Ovary (tissue), 10 donors: ENCODE measurements at regions of chr5 and their contacts with region 1.

Region 1: GRCh38 chr5:170267431-170268152 is 30.0 kb downstream of the LCP2 start:
- DNase-seq: peak; percentile 71 to 85 (median 77)
- H3K4me3 ChIP-seq: no peak overlapping the region
- H3K27ac ChIP-seq: no peak overlapping the region
- H3K4me1 ChIP-seq: peaks cover 13% of the 10 kb centered on the region
- H3K27me3 ChIP-seq: no peaks in the 10 kb centered on the region
- CTCF ChIP-seq: peak in 2 of 3 donors; percentile 71 to 74
- EP300 ChIP-seq: no peak
- POLR2A ChIP-seq: no peak

Region 2: DNA sequence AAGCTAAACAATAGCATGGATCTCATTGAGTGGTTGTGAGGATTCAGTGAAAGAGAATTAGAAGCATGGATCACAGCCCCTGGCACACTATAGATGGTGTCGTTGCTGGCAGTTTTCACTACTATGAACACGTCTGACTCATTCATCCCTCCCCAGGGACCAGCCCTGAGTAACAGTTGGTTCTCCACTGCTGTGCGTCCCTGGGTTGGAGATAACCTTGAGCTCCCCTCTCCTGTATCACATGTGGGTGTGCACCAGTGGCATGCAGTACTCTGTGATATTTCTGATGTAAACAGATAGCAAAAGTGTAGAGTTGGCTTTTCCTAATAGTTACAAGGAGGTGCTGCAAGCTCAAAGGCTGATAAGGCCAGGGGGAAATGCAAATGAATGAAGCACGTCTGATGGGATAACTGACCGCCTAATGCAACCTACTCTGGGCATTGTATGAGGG is 38.8 kb after region 1 on chr5:
- intact Hi-C with region 1: loop called in 1 of 4 experiments (anchors 5 kb)
- DNase-seq: peak; percentile 58 to 87 (median 80)
- H3K4me3 ChIP-seq: no peak overlapping the region
- H3K27ac ChIP-seq: peak overlapping the region; percentile 45 to 54
- H3K4me1 ChIP-seq: peaks cover 32% of the 10 kb centered on the region
- H3K27me3 ChIP-seq: no peaks in the 10 kb centered on the region
- CTCF ChIP-seq: no peak
- EP300 ChIP-seq: no peak
- POLR2A ChIP-seq: no peak

Region 3: GRCh38 chr5:170333161-170333910 is 65.7 kb after region 1 on chr5:
- intact Hi-C with region 1: loop called in 1 of 4 experiments (anchors 5 kb)
- DNase-seq: no peak
- H3K4me3 ChIP-seq: no peak overlapping the region
- H3K27ac ChIP-seq: no peak overlapping the region
- H3K4me1 ChIP-seq: peaks cover 8% of the 10 kb centered on the region
- H3K27me3 ChIP-seq: no peaks in the 10 kb centered on the region
- CTCF ChIP-seq: no peak
- EP300 ChIP-seq: no peak
- POLR2A ChIP-seq: no peak

Region 4: DNA sequence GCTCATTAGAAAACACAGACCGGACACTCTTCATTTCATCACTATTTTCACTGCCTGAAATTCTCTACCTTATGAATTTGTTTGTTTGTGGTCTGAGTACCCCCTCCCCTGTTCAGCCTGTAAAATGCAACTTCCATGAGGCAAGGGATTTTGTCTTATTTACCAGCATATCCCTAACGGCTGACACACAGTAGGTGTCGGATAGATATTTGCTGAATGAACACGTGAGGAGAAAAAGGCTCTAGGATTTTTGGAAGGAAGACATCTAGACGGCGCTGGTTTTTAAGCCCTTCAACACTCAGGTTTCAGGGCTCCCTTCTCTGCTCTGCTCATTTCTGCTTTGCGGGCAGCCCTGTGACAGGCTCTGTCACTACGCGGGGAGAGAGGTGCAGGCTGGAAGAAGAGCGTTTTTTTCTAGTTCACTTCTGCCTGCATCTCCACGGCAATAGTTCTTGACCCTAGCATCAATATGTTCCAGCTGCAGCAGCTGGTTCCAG is 80.6 kb after region 1 on chr5:
- intact Hi-C with region 1: loop called in 1 of 4 experiments (anchors 5 kb)
- DNase-seq: no peak
- H3K4me3 ChIP-seq: no peak overlapping the region
- H3K27ac ChIP-seq: no peak overlapping the region
- H3K4me1 ChIP-seq: peaks cover 4% of the 10 kb centered on the region
- H3K27me3 ChIP-seq: no peaks in the 10 kb centered on the region
- CTCF ChIP-seq: peak in 2 of 3 donors; percentile 51 to 62
- EP300 ChIP-seq: no peak
- POLR2A ChIP-seq: no peak

Region 5: DNA sequence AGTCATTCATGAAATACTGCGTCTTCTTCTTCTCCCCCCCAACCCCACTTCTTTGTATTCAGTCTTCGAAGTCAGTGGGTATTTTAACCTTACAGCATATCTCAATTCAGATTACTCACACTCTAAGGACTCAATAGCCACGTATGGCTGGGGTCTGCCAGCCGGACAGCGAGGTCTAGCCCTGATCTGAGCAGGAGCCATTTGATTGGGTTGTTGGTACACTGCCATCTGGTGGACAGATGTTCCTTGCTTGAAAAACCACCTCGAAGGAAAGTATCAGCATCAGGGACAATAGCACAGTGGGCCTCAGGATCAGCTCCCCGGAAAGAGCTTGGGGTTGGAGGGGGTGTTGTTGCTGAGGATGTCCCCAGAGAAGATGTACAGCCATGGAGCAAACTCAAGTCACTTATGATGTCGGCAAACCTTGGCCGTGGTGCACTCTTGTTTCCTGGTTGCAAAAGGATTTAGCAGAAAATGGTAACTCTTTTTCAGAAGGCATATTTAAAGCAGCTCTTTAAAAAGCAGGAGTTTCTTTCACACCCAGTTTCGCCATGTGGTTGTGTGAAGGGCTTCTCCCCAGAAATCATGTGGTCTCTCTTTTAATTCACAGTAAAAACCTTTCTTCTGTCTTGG is 153.3 kb after region 1 on chr5:
- intact Hi-C with region 1: loop called in 1 of 4 experiments (anchors 5 kb)
- DNase-seq: peak; percentile 40 to 63 (median 51)
- H3K4me3 ChIP-seq: no peak overlapping the region
- H3K27ac ChIP-seq: no peak overlapping the region
- H3K4me1 ChIP-seq: no peaks in the 10 kb centered on the region
- H3K27me3 ChIP-seq: no peaks in the 10 kb centered on the region
- CTCF ChIP-seq: peak; percentile 28 to 65 (median 60)
- EP300 ChIP-seq: no peak
- POLR2A ChIP-seq: no peak